HCT116 (cell line): ENCODE measurements at regions of chr17 and their contacts with region 1.

Region 1: DNA sequence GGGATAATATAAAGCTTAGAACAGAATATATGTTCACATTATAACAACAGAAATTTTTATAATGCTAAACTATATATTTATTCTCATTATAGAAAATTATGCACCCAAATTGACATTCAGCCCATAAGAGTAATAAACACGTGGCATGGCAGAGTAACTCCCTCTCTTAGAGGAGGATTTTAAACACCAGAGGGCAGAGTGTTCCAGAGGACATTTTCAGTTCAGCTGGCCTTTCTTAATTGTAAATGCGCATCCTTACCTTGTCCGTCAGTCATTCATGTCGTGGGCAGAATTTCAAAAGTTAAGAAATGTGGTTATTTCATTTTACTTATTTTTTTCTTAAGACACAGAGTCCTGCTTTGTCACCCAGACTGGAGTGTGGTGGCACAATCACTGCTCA is 147.1 kb downstream of the TANC2 start:
- DNase-seq: no peak
- ATAC-seq: peak; percentile 58
- H3K4me3 ChIP-seq: no peak overlapping the region
- H3K27ac ChIP-seq: no peak overlapping the region
- H3K4me1 ChIP-seq: no peaks in the 10 kb centered on the region
- H3K27me3 ChIP-seq: no peaks in the 10 kb centered on the region
- CTCF ChIP-seq: peak; percentile 36 to 47 (median 42); a peak in 5 of 6 replicates
- POLR2A ChIP-seq: no peak
- RAD21 ChIP-seq: peak; percentile 48; the same call in 1 of the 2 replicates

Region 2: DNA sequence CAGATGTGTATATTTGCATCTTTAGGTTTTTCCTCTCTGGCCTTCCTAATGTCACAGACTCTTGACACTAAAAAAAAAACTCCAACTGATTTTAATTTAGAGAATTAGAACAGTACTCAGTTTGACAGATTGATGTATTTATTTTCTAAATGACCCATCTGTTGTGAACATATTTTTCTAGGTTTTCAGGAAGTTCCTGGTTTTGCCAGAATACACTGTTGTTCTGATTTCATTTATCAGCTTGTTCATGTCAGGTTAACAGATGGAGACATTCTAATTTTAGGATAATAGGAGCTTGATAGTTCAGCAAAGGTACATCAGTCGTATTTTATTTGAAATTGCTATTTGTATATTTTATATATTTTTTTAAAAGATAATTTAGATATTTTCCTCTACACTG is 13.8 kb before region 1 on chr17:
- CTCF ChIA-PET with region 1: interaction called, 11 read pairs
- POLR2A ChIA-PET with region 1: interaction called, 3 read pairs
- RAD21 ChIA-PET with region 1: no interaction called
- intact Hi-C with region 1: no loop called
- DNase-seq: no peak
- ATAC-seq: no peak
- H3K4me3 ChIP-seq: no peak overlapping the region
- H3K27ac ChIP-seq: no peak overlapping the region
- H3K4me1 ChIP-seq: no peaks in the 10 kb centered on the region
- H3K27me3 ChIP-seq: no peaks in the 10 kb centered on the region
- CTCF ChIP-seq: no peak
- POLR2A ChIP-seq: no peak
- RAD21 ChIP-seq: no peak